OCI-LY7 (cell line): ENCODE measurements at regions of chr12 and their contacts with region 1.

Region 1: DNA sequence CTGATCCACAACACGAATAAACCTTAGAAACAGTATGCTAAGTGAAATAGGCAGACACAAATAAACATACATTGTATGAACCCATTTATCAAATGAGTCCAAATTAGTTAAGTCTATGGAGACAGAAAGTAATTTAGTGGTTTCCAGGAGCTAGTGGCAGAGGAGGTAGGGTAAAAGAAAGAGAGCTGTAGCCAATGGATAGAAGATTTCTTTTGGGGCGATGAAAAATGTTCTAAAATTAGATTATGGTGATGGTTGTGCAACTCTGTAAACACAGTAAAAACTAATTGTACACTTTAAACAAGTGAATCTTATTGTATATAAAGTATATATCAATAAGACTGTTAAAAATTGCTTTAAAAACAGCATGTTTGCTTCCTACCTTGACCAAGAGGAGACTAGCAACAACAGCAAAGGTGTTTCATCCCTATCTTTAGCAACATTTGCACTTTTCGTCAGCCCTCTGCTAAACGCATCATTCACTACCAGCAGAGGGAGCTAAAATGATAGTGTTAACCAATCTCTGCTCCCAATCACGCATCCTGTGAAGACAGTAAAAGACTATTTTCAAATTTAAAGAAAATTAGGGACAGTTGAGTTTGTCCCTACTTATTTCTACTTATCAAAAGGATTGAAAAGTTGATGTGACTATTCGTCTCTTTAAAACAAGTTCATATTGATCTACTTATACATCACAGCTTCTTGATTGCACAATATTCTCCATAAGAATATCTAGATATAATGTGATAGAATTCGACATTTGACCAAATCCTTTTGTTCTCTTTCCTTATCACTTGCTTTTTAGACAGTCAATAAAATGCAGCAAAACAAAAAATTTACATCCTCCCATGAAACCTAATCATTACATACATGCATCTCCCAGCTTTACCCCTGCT is 24.0 kb upstream of the LGR5 start:
- DNase-seq: peak; percentile 69
- H3K4me3 ChIP-seq: no peak overlapping the region
- H3K27ac ChIP-seq: no peak overlapping the region
- H3K4me1 ChIP-seq: no peaks in the 10 kb centered on the region
- CTCF ChIP-seq: peak; percentile 94

Region 2: GRCh38 chr12:71400481-71400880 is 15.1 kb before region 1 on chr12:
- CTCF ChIA-PET with region 1: no interaction called
- POLR2A ChIA-PET with region 1: no interaction called
- intact Hi-C with region 1: no loop called
- DNase-seq: no peak
- H3K4me3 ChIP-seq: no peak overlapping the region
- H3K27ac ChIP-seq: no peak overlapping the region
- H3K4me1 ChIP-seq: no peaks in the 10 kb centered on the region
- CTCF ChIP-seq: no peak

Region 3: GRCh38 chr12:71504476-71504875 is 88.9 kb after region 1 on chr12:
- CTCF ChIA-PET with region 1: no interaction called
- POLR2A ChIA-PET with region 1: no interaction called
- intact Hi-C with region 1: no loop called
- DNase-seq: no peak
- H3K4me3 ChIP-seq: no peak overlapping the region
- H3K27ac ChIP-seq: no peak overlapping the region
- H3K4me1 ChIP-seq: peaks cover 13% of the 10 kb centered on the region
- CTCF ChIP-seq: no peak

Region 4: DNA sequence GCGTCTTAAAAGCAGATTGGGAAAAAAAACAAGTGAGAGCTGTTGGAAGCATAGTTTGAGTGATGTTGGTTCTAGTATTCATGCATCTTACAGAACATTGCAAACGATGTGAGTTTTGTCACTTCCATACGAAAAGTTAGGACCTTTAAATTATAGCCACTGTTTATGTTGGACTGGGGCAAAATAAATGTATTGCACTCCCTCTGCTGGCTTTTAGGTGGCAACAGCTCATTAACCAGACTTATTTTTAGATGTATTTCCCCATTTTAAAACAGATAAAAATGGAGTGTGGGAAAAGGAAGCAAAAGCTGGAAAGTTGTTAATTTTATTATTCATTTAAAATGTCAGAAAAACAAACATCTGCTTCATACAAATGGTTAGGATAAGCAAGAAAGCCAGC is 135.9 kb after region 1 on chr12:
- CTCF ChIA-PET with region 1: no interaction called
- POLR2A ChIA-PET with region 1: no interaction called
- intact Hi-C with region 1: loop called (anchors 1 kb)
- DNase-seq: peak; percentile 14
- H3K4me3 ChIP-seq: no peak overlapping the region
- H3K27ac ChIP-seq: no peak overlapping the region
- H3K4me1 ChIP-seq: no peaks in the 10 kb centered on the region
- CTCF ChIP-seq: peak; percentile 69

Region 5: DNA sequence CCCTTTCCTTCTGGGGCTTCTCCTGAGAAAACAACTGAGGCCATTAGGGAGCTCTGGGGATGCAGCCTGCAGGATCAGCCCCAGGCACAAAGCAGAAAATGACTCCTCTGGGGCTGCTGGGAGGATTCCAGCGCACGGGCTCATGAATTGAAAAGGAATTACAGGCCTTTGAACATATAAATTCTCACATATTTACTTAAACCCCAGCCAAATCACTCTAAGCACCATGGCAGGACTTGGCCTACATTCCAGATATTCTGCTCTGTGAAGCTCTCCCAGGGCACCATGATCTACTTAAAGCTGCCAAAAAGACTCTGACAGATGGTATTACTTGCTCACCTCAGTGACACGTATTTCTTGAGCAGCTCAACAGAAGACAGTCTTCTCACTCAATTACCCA is 160.9 kb after region 1 on chr12:
- CTCF ChIA-PET with region 1: no interaction called
- POLR2A ChIA-PET with region 1: no interaction called
- intact Hi-C with region 1: no loop called
- DNase-seq: no peak
- H3K4me3 ChIP-seq: no peak overlapping the region
- H3K27ac ChIP-seq: no peak overlapping the region
- H3K4me1 ChIP-seq: no peaks in the 10 kb centered on the region
- CTCF ChIP-seq: no peak

Region 6: DNA sequence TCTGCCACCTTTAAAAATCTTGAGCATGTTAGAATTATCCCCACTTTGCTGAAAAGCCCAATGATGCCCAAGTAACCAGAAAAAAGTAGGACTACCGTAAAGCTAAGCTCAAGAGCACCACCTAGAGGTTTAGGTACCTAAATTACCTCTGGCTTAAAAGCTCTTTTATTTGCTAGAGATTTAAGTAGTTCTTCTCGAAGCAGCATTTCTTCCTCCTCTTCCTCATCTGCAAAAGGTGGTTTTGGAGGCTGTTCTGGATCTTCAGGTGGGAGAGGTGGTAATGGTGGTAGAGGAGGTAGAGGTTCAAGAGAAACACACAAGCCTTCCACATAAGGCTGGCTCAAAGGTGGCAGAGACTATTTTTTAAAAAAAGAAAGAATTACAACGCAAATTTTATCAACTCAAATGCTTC is 221.1 kb after region 1 on chr12:
- CTCF ChIA-PET with region 1: no interaction called
- POLR2A ChIA-PET with region 1: no interaction called
- intact Hi-C with region 1: loop called (anchors 1 kb)
- DNase-seq: peak; percentile 83
- H3K4me3 ChIP-seq: no peak overlapping the region
- H3K27ac ChIP-seq: no peak overlapping the region
- H3K4me1 ChIP-seq: no peaks in the 10 kb centered on the region
- CTCF ChIP-seq: peak; percentile 94